ENCODE measurements at regions of chr12 and their contacts with region 1.

Region 1: GRCh38 chr12:130904064-130904463 is 32.2 kb downstream of the RAN start:
- DNase-seq: no peak
- H3K4me3 ChIP-seq: no peak overlapping the region
- H3K27ac ChIP-seq: no peak overlapping the region
- H3K4me1 ChIP-seq: no peaks in the 10 kb centered on the region
- H3K27me3 ChIP-seq: no peaks in the 10 kb centered on the region
- CTCF ChIP-seq: no peak
- POLR2A ChIP-seq: no peak

Region 2: DNA sequence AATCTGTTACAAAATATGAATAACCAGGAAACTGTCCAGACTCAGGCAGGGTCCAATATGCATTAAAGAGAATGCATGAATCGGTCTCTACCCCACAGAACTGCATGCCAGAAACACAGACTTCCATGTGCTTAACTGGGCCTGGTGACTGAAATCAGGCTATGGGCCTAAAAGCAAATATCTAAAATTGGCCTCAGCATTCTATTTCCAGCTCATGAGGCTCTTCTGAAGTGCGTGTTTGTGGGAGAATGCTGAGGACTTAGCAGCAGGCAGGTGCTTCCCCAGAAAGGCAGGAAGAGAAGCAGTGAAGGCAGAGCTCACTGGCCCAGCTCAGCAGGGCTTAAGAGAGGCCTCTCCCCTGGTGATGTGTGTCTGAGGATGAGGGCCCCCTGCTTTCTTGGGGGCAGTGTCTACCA is 98.2 kb after region 1 on chr12:
- intact Hi-C with region 1: no loop called
- DNase-seq: no peak
- H3K4me3 ChIP-seq: no peak overlapping the region
- H3K27ac ChIP-seq: peak overlapping the region in 1 of 2 donors; percentile 19
- H3K4me1 ChIP-seq: peaks cover 14% of the 10 kb centered on the region
- H3K27me3 ChIP-seq: no peaks in the 10 kb centered on the region
- CTCF ChIP-seq: no peak
- POLR2A ChIP-seq: no peak

Region 3: DNA sequence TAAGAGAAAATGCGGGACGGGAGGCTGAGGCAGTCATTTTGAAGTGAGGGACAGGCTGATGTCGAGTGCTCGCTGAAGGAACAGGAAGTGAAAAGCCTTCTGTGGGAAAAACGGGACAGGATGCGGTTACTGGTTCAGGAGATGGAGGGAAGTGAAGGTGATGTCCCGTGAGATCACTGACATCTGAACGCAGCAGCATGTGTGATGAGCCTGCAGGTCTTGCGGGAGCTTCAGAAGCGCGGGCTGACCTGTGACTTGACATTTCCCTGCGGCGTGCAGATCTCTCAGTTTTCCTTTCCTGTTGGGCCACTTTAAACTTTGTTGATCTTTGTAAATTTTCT is 1162.3 kb after region 1 on chr12:
- intact Hi-C with region 1: loop called (anchors 10 kb)
- DNase-seq: no peak
- H3K4me3 ChIP-seq: no peak overlapping the region
- H3K27ac ChIP-seq: no peak overlapping the region
- H3K4me1 ChIP-seq: no peaks in the 10 kb centered on the region
- H3K27me3 ChIP-seq: no peaks in the 10 kb centered on the region
- CTCF ChIP-seq: no peak
- POLR2A ChIP-seq: no peak

Measured in testis (tissue), 5 donors.